SK-MEL-5 (cell line): ENCODE measurements at regions of chr12 and their contacts with region 1.

Region 1: DNA sequence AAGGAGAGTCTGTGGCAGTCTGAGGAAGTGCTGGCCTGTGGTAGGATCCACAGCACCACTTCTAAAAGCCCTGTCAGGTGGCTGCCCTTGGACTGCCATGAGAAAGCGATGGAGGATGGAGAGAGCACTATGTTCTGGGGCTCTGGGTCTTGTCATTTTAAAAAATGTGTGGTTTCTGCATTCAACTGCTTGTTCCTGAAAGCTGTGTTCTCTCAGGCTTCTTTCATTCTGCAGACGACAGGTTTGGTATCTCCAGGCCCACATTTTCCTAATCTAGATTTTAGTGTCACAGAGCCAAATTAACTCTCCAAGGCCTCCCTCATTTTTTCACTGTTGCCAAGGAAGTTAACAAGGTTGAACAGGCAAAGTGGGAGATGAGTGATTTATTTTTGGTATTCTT is 10.5 kb downstream of the OVCH1 start:
- DNase-seq: no peak

Region 2: GRCh38 chr12:29317556-29318363 is 169.2 kb before region 1 on chr12:
- in situ Hi-C with region 1: loop called (anchors 25 kb)
- DNase-seq: peak; percentile 91